T-cell (primary cell): ENCODE measurements at regions of chr9 and their contacts with region 1.

Region 1: DNA sequence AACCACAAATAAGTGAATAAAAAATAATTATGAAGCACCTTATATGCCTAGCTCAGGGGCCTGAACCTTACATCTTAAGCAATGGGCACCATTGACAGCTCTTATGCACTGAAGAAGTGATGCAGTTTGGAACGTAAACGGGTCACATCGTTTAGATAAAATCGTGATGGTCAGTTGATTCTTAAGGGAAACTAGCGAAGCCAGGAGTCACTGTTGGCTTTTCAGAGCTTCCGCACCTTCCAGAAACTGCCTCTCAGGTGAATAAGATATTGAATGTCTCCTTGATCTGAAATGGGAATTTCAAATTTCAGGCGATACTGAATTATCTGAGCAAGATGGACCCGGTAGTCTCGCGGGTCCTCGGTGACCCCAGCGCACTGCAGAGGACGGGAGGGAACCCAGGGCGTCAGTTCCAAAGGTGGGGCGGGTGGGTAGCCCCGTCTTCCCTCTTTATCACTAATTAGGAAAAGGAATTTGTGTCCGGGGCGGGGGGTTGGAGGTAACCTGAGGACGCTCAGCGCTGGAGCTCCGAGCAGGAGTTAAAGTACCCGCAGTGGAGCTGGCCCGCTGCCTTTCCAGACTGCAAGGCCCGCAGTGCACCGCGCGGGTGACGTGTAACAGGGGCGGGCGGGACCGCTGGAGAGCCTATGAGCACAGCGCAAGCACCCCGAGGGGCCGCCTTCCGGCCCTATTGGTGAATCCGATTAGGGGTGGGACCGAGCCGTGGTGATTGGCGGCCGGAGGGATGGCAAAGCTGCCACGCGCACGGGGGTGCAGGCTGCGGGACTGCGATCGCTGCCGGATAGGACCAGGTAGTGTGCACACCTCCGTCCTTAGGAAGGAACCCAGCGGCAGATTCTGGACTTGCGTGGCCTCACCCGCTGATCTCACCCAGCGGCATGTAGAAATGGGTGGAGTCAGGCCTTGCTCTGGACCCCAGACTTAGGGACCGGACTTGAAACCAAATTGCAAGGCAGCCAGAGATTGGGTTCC is 19.7 kb upstream of the GARNL3 start:
- DNase-seq: peak; percentile 89 to 97 (median 94)
- ATAC-seq: peak; percentile 100
- H3K4me3 ChIP-seq: peak overlapping the region; percentile 54 to 71
- H3K4me3 Mint-ChIP-seq: peak overlapping the region; percentile 77 to 83 (median 82)
- H3K27ac ChIP-seq: no peak overlapping the region
- H3K27ac Mint-ChIP-seq: peak overlapping the region; percentile 34 to 59
- H3K4me1 ChIP-seq: peaks cover 3 to 13% of the 10 kb centered on the region in 2 experiments
- H3K4me1 Mint-ChIP-seq: peaks cover 8 to 14% (median 12%) of the 10 kb centered on the region in 3 donors
- H3K27me3 ChIP-seq: no peaks in the 10 kb centered on the region
- H3K27me3 Mint-ChIP-seq: peaks cover 5 to 6% of the 10 kb centered on the region in 2 donors

Region 2: GRCh38 chr9:127199001-127199791 is 45.7 kb before region 1 on chr9:
- CTCF ChIA-PET with region 1: no interaction called
- POLR2A ChIA-PET with region 1: no interaction called
- DNase-seq: peak; percentile 28 to 86 (median 68)
- ATAC-seq: peak; percentile 70 to 76 (median 74)
- H3K4me3 ChIP-seq: no peak overlapping the region
- H3K4me3 Mint-ChIP-seq: no peak overlapping the region
- H3K27ac ChIP-seq: no peak overlapping the region
- H3K27ac Mint-ChIP-seq: no peak overlapping the region
- H3K4me1 ChIP-seq: peaks cover 0 to 9% of the 10 kb centered on the region in 2 experiments
- H3K4me1 Mint-ChIP-seq: peaks cover 11 to 25% (median 20%) of the 10 kb centered on the region in 3 donors
- H3K27me3 ChIP-seq: peaks cover 0 to 22% of the 10 kb centered on the region in 2 experiments
- H3K27me3 Mint-ChIP-seq: peaks cover 0 to 9% of the 10 kb centered on the region in 2 donors

Region 3: DNA sequence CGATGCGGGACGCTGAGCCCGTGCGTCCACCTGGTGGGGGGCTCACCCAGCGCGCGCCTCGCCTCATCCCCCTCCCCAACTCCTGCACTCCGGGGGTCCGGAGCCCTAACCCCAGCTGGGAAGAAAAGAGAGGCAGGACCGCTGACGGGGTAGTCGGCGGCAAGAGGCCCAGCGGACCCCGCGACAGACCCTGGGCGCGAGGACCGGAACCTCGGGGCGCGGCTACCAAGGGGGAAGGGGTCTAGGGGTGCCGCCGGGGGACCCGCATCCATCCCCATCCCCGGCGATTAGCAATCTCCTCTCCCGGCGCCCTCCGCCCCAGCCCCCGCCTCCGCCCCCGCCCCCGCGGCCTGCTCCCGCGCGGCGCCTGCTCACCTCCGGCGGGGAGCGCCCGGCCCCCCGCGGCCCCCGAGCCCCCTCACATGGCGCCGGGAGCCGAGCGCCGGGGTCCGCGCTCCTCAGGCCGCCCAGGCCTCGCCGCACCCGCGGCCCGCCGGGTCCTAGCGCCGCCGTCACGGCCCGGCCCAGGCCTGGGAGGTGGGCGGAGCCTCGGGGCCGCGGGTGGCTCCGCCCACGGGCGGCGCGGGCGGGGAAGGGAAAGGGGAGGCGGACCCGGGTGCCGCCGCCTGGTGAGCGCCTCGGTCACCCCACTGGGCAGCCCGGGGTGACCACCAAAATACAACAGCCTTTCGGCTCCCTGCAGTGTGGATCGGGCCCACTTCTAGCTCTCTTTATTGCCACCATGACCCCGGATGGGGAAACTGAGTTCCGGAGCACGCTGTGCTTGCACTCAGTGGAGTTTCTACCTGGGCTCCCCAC is 654.4 kb after region 1 on chr9 and contains the start of gene ST6GALNAC6:
- CTCF ChIA-PET with region 1: no interaction called
- POLR2A ChIA-PET with region 1: interaction called in 1 of 2 experiments, 12 read pairs
- DNase-seq: peak in 32 of 35 experiments; percentile 30 to 81 (median 52)
- ATAC-seq: peak; percentile 81 to 87 (median 85)
- H3K4me3 ChIP-seq: peak within 1 kb of the TSS; percentile 65 to 89
- H3K4me3 Mint-ChIP-seq: peak within 1 kb of the TSS; percentile 81 to 87 (median 87)
- H3K27ac ChIP-seq: peak within 1 kb of the TSS; percentile 58
- H3K27ac Mint-ChIP-seq: peak within 1 kb of the TSS; percentile 81 to 84
- H3K4me1 ChIP-seq: peaks cover 21 to 67% of the 10 kb centered on the region in 2 experiments
- H3K4me1 Mint-ChIP-seq: peaks cover 44 to 48% (median 45%) of the 10 kb centered on the region in 3 donors
- H3K27me3 ChIP-seq: no peaks in the 10 kb centered on the region
- H3K27me3 Mint-ChIP-seq: no peaks in the 10 kb centered on the region
- total RNA-seq, gene ST6GALNAC6: 73.0 to 123 (median 86.3) TPM

Region 4: DNA sequence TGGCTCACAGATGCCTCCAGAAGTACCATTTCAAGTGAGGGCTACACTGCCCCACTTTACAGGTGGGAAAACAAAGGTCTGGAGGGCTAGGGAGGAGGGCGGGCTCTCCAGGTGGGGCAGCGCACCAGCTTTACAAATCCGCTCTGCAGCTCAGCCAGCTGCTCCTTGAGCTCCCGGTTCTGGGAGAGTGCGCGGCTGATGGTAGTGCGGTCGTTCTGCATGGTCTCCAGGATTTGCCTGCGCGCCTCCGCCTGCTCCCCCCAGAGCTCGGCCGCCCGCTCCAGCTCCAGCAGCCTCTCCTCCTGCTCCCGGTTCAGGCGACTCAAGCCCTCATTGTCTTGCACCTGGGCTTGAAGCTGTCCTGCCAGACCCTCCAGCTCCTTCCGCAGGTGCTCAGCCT is 1015.4 kb after region 1 on chr9:
- CTCF ChIA-PET with region 1: no interaction called
- POLR2A ChIA-PET with region 1: interaction called in 1 of 2 experiments, 10 read pairs
- DNase-seq: no peak
- ATAC-seq: no peak
- H3K4me3 ChIP-seq: no peak overlapping the region
- H3K4me3 Mint-ChIP-seq: no peak overlapping the region
- H3K27ac ChIP-seq: no peak overlapping the region
- H3K27ac Mint-ChIP-seq: no peak overlapping the region
- H3K4me1 ChIP-seq: no peaks in the 10 kb centered on the region
- H3K4me1 Mint-ChIP-seq: no peaks in the 10 kb centered on the region
- H3K27me3 ChIP-seq: peaks cover 0 to 2% of the 10 kb centered on the region in 2 experiments
- H3K27me3 Mint-ChIP-seq: no peaks in the 10 kb centered on the region